Heart left ventricle (tissue), 16 donors: ENCODE measurements at regions of chr22 and their contacts with region 1.

Region 1: DNA sequence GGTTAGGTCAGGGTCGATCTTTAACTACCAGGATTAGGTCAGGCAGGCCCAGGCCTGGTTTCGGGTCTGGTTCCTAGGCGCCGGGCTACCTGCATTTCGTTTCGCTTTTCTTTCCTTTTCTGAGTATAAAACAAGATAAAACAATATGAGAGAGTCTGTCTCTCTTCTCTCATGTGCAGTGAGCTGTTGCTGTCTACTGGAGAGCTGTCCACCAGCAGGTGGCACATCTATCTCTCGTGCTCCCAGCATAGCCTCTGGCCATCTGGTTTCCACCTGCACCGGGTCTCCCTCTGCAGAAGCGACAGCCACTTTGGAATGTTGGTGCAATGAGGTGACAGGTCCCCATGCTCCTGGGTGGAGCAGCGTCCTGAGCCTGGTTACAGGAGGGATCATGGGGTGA is 27.6 kb downstream of the RIBC2 start:
- DNase-seq: peak in 4 of 5 donors; percentile 43 to 78 (median 62)
- ATAC-seq: peak; percentile 57 to 92 (median 89)
- H3K4me3 ChIP-seq: no peak overlapping the region
- H3K27ac ChIP-seq: no peak overlapping the region
- H3K4me1 ChIP-seq: peaks cover 0 to 6% (median 0%) of the 10 kb centered on the region in 12 donors
- H3K27me3 ChIP-seq: peaks cover 0 to 11% (median 0%) of the 10 kb centered on the region in 9 donors
- CTCF ChIP-seq: peak; percentile 40 to 76 (median 62)
- POLR2A ChIP-seq: no peak

Region 2: DNA sequence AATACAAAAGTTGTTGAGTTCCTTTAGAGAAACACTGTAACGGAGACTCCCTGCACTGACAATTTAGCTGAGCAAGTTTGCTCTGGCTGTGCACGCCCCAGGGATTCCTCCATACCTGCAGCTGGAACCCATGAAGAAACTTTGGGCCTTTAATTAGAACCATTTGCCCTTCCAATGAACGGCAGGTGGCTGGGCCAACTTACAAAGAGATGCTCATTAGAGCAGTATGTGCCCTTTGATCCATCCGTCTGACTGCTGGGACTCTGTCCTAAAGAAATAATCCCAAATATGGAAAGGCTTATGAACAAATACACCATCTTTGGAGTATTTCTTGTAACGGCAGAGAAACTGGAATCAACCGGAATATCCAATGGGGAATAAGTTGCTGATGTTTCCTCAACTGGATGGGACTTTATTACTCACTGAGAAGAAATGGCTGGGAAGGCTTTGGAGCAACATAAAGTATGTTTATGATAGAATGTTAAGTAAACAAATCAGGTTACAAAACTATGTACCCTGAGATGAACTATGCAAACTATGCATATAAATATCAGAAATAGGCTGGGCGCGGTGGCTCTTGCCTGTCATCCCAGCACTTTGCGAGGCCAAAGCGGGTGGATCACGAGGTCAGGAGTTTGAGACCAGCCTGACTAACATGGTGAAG is 37.1 kb after region 1 on chr22:
- intact Hi-C with region 1: no loop called
- DNase-seq: peak in 1 of 5 donors; percentile 45
- ATAC-seq: peak in 3 of 4 donors; percentile 57 to 72 (median 72)
- H3K4me3 ChIP-seq: no peak overlapping the region
- H3K27ac ChIP-seq: peak overlapping the region in 8 of 12 donors; percentile 2 to 48 (median 38)
- H3K4me1 ChIP-seq: peaks cover 0 to 30% (median 2%) of the 10 kb centered on the region in 12 donors
- H3K27me3 ChIP-seq: no peaks in the 10 kb centered on the region
- CTCF ChIP-seq: no peak
- POLR2A ChIP-seq: no peak

Region 3: DNA sequence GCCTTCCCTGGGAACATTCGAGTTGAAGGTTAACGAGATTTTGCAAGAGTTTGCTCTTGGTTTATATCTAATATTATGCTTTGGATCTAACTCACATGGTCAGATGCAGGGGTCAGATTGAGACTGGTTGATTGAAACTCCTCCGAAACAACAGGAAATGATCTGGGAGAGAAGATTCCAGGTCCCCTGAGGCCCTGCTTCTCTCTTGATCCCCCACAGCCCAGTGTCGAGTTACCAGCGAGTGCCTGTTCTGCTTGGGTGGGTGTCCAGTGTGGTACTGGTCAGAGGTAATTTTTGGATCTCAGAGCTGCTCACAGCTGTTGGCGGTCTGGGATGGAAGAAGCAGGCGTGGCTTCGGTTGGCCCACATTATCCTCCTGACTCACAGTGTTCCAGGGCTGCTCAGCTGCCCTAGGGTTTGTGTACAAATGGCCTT is 70.7 kb after region 1 on chr22:
- intact Hi-C with region 1: loop called in 1 of 10 experiments (anchors 10 kb)
- DNase-seq: peak; percentile 70 to 85 (median 78)
- ATAC-seq: peak; percentile 74 to 93 (median 88)
- H3K4me3 ChIP-seq: no peak overlapping the region
- H3K27ac ChIP-seq: peak overlapping the region; percentile 23 to 77 (median 62)
- H3K4me1 ChIP-seq: peaks cover 0 to 65% (median 15%) of the 10 kb centered on the region in 12 donors
- H3K27me3 ChIP-seq: peaks cover 0 to 3% (median 0%) of the 10 kb centered on the region in 9 donors
- CTCF ChIP-seq: no peak
- POLR2A ChIP-seq: no peak

Region 4: GRCh38 chr22:45526768-45527360 is 85.7 kb after region 1 on chr22:
- intact Hi-C with region 1: no loop called
- DNase-seq: no peak
- ATAC-seq: no peak
- H3K4me3 ChIP-seq: no peak overlapping the region
- H3K27ac ChIP-seq: no peak overlapping the region
- H3K4me1 ChIP-seq: peaks cover 0 to 7% (median 0%) of the 10 kb centered on the region in 12 donors
- H3K27me3 ChIP-seq: no peaks in the 10 kb centered on the region
- CTCF ChIP-seq: no peak
- POLR2A ChIP-seq: no peak